Activated CD4-positive, alpha-beta memory T cell treated with anti-CD3 and anti-CD28 coated beads, Interleukin-2, amount 10 ng/mL, durations not matched to agents 7 days and 5 days (primary cell): ENCODE measurements at regions of chr5 and their contacts with region 1.

Region 1: DNA sequence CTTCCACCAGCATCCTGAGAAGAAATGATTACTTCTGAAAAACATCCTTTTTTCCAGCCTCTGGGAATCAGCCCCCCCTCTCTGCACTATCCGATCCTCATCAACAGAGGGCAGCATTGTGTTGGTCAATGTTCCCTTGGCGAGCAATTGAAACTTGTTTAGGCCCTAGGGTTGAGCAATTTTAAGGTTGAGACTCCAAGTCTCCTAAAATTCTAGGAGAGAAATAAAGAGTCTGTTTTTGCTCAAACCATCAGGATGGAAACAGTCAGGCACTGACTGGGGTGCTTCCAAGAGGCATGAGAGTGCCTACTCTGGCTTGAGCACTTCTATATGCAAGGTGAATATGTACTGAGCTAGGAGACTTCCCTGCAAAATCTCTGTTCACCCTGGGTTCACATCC is 12.4 kb upstream of the CYFIP2 start:
- DNase-seq: no peak
- H3K4me3 Mint-ChIP-seq: peak overlapping the region; percentile 19
- H3K27ac Mint-ChIP-seq: peak overlapping the region; percentile 96
- H3K4me1 Mint-ChIP-seq: peaks cover 92% of the 10 kb centered on the region
- H3K27me3 Mint-ChIP-seq: no peaks in the 10 kb centered on the region

Region 2: GRCh38 chr5:157180374-157181264 is 72.9 kb before region 1 on chr5 and contains the start of gene ITK:
- CTCF ChIA-PET with region 1: interaction called, 7 read pairs
- POLR2A ChIA-PET with region 1: interaction called, 18 read pairs
- DNase-seq: peak; percentile 67
- H3K4me3 Mint-ChIP-seq: peak within 1 kb of the TSS; percentile 94
- H3K27ac Mint-ChIP-seq: peak within 1 kb of the TSS; percentile 99
- H3K4me1 Mint-ChIP-seq: peaks cover 49% of the 10 kb centered on the region
- H3K27me3 Mint-ChIP-seq: no peaks in the 10 kb centered on the region
- total RNA-seq, gene ITK: 247 to 249 TPM

Region 3: DNA sequence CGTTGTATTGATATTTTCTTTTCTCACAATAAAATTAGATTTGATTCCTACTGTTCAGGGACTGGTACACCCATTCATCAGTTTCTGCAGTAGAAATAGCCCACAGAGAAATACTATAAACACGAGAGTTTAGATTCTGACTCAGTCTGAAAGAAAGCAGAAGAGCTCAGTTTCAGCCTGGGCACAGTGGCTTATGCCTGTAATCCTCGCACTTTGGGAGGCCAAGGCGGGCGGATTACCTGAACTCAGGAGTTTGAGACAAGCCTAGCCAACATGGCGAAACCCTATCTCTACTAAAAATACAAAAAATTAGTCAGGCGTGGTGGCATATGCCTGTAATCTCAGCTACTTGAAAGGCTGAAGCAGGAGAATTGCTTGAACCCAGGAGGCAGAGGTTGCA is 64.3 kb before region 1 on chr5:
- CTCF ChIA-PET with region 1: interaction called, 3 read pairs
- POLR2A ChIA-PET with region 1: interaction called, 31 read pairs
- DNase-seq: no peak
- H3K4me3 Mint-ChIP-seq: peak overlapping the region; percentile 70
- H3K27ac Mint-ChIP-seq: peak overlapping the region; percentile 85
- H3K4me1 Mint-ChIP-seq: peaks cover 83% of the 10 kb centered on the region
- H3K27me3 Mint-ChIP-seq: no peaks in the 10 kb centered on the region

Region 4: GRCh38 chr5:157265714-157266285 is 12.3 kb after region 1 on chr5 and contains the start of gene CYFIP2:
- CTCF ChIA-PET with region 1: interaction called, 36 read pairs
- POLR2A ChIA-PET with region 1: interaction called, 145 read pairs
- DNase-seq: peak; percentile 91
- H3K4me3 Mint-ChIP-seq: peak within 1 kb of the TSS; percentile 98
- H3K27ac Mint-ChIP-seq: peak within 1 kb of the TSS; percentile 97
- H3K4me1 Mint-ChIP-seq: peaks cover 66% of the 10 kb centered on the region
- H3K27me3 Mint-ChIP-seq: no peaks in the 10 kb centered on the region
- total RNA-seq, gene CYFIP2: 337 to 354 TPM

Region 5: GRCh38 chr5:157303667-157304327 is 50.2 kb after region 1 on chr5:
- CTCF ChIA-PET with region 1: interaction called, 41 read pairs
- POLR2A ChIA-PET with region 1: interaction called, 15 read pairs
- DNase-seq: peak; percentile 65
- H3K4me3 Mint-ChIP-seq: peak overlapping the region; percentile 60
- H3K27ac Mint-ChIP-seq: peak overlapping the region; percentile 93
- H3K4me1 Mint-ChIP-seq: peaks cover 64% of the 10 kb centered on the region
- H3K27me3 Mint-ChIP-seq: no peaks in the 10 kb centered on the region

Region 6: DNA sequence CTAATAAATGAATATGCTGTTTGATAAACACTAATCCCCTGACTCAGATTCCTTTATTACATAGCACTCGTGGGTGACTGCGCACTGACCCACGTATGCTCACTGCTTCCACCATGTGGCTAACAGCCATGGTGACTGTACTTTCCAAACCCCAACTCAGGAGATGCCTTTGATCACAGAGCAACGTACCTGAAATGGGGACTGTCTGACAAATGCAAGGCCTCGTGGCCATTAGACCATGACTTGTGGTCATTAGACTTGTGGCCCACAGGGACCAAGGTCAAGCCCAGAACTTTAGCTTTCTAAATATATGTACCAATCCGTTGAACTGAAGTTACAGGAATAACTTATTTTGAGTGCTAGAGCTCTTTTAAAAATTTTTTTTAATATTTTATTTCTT is 58.9 kb after region 1 on chr5:
- CTCF ChIA-PET with region 1: interaction called, 41 read pairs
- POLR2A ChIA-PET with region 1: interaction called, 15 read pairs
- DNase-seq: peak; percentile 68
- H3K4me3 Mint-ChIP-seq: no peak overlapping the region
- H3K27ac Mint-ChIP-seq: peak overlapping the region; percentile 37
- H3K4me1 Mint-ChIP-seq: peaks cover 30% of the 10 kb centered on the region
- H3K27me3 Mint-ChIP-seq: no peaks in the 10 kb centered on the region

Region 7: GRCh38 chr5:157328277-157328912 is 74.8 kb after region 1 on chr5:
- CTCF ChIA-PET with region 1: interaction called, 14 read pairs
- POLR2A ChIA-PET with region 1: no interaction called
- DNase-seq: peak; percentile 58
- H3K4me3 Mint-ChIP-seq: no peak overlapping the region
- H3K27ac Mint-ChIP-seq: peak overlapping the region; percentile 77
- H3K4me1 Mint-ChIP-seq: peaks cover 22% of the 10 kb centered on the region
- H3K27me3 Mint-ChIP-seq: no peaks in the 10 kb centered on the region